ENCODE measurements at regions of chr2 and their contacts with region 1.

Region 1: DNA sequence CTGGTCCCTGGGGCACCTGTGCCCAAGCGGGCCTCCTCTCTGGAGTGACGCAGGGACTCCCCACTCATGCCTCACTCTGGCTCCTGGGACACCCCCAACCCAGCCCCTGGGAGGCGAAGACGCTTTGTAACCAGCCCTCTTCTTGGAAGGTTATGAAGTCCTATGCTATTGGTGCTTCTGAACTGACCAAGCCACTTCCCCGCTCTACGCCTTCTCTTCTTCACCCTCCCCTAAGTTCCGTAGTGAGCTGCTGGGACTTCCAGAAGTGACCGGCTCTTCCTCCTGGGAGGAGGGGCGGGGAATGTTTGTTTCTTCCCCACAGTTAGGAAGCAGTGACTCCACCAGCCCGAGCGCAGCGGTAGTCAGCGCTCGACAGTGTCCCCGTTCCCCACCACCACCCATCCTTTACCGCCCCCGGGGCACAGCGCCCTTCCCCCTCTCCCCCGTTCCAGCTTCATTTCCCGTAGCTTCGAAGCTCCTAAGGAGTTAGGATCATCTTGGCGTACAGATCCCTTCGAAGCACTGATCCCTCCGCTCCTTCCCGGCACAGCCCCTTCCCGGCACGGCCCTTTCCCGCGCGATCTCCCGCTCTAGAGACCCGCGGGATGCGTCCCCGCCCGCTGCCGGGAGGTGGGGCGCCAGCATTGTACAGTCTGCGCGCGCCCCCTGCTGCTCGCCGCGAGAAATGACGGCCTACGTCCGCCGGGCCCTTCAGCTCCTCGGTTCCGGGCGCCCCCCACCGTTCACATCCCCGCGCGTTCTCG is 25.3 kb upstream of the NOTO start:
- DNase-seq: peak; percentile 77
- H3K4me3 Mint-ChIP-seq: peak overlapping the region; percentile 84
- H3K27ac Mint-ChIP-seq: peak overlapping the region; percentile 50
- H3K4me1 Mint-ChIP-seq: peaks cover 26% of the 10 kb centered on the region
- H3K27me3 Mint-ChIP-seq: peaks cover 50% of the 10 kb centered on the region

Region 2: DNA sequence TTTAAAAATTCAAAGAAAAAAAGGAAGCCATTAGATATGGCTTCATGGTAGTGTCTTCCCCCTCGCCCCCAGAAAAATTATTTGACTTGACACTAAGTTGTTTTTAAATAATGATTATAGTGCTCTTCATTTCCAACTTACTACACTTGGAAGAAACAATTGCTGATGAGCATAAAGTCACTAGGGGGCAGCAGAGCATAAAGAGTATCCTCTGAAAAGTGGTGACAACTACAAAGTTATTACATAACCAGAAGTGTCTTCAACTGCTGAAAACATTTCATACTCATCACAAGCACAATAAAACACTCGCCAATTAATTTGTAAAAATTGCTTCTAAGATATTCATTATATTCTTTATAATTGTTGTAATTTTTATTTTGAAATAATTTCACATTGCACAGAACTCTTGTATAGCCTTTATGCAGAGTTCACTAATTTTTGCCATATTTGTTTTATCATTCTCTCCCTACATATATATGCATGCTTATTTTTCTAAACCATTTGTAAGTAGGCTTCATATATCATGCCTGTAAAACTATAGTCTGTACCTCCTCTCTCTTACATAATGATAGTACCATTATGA is 406.1 kb before region 1 on chr2:
- intact Hi-C with region 1: loop called (anchors 5 kb)
- DNase-seq: peak; percentile 45
- H3K4me3 Mint-ChIP-seq: no peak overlapping the region
- H3K27ac Mint-ChIP-seq: no peak overlapping the region
- H3K4me1 Mint-ChIP-seq: no peaks in the 10 kb centered on the region
- H3K27me3 Mint-ChIP-seq: no peaks in the 10 kb centered on the region

Region 3: DNA sequence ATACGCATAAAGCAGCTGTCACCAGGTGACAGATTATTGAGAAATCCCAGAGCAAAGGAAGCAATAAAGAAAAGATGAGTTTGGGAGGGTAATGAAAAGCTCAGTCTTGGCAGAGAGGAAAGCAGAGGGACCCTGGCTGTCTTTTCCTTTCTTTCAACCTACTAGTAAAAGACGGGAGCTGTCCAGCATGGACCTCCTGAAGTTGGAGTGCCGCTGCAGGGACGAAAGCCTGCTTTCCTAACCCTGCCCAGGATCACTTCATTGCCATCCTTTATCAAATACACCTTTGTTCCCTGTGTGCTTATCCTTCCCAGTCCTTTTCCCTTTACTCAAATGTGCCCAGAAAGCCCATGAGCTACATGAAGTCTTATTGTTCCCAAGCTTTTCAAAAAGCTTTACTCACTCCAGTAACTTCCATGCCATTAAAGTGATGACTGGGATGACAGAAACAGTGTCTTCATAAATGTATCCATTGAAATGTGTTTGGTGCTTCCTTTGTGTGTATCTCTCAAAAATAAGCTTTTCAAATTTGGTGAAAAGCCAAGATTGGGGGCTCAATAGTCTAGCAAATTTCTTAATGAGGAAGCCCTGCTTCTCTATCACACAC is 293.6 kb before region 1 on chr2:
- intact Hi-C with region 1: no loop called
- DNase-seq: no peak
- H3K4me3 Mint-ChIP-seq: no peak overlapping the region
- H3K27ac Mint-ChIP-seq: no peak overlapping the region
- H3K4me1 Mint-ChIP-seq: no peaks in the 10 kb centered on the region
- H3K27me3 Mint-ChIP-seq: peaks cover 42% of the 10 kb centered on the region

Region 4: DNA sequence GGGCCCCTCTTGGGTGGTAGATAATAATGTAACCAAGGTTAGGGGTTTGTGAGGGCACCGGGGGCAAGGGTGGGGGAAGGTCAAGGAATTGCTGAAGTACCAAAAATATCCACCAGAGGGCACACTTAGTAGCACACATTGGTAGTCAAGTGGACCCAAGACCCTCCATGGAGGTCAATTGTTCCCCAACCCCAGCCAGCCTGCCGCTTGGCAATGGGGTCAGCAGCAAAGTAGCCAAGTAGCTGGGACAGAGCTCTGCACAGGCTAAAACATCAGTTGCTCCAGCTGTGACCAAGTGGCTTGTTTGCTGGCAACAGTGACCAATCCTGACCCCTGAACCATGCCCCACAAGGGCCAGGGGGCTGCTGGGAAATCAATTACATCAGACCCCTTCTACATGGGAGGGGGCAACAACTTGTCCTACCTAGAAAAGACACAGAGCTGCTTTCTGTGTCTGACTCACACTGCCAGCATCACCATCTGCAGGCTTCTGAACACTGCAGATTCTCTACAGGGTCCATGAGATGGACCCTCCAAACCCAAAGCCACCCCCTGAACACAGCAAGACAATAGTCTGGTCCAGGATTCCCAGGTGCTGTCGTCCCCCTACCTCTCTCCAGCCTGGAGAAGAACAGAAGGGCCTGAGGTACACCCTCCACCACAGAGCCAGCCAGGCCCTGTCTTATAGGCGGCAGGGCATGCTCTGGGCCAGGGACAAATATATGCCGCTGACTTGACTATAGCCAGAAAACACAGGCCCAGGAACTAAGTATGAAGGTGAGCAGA is 183.7 kb before region 1 on chr2:
- intact Hi-C with region 1: loop called (anchors 1 kb)
- DNase-seq: peak; percentile 19
- H3K4me3 Mint-ChIP-seq: no peak overlapping the region
- H3K27ac Mint-ChIP-seq: no peak overlapping the region
- H3K4me1 Mint-ChIP-seq: no peaks in the 10 kb centered on the region
- H3K27me3 Mint-ChIP-seq: no peaks in the 10 kb centered on the region

Region 5: DNA sequence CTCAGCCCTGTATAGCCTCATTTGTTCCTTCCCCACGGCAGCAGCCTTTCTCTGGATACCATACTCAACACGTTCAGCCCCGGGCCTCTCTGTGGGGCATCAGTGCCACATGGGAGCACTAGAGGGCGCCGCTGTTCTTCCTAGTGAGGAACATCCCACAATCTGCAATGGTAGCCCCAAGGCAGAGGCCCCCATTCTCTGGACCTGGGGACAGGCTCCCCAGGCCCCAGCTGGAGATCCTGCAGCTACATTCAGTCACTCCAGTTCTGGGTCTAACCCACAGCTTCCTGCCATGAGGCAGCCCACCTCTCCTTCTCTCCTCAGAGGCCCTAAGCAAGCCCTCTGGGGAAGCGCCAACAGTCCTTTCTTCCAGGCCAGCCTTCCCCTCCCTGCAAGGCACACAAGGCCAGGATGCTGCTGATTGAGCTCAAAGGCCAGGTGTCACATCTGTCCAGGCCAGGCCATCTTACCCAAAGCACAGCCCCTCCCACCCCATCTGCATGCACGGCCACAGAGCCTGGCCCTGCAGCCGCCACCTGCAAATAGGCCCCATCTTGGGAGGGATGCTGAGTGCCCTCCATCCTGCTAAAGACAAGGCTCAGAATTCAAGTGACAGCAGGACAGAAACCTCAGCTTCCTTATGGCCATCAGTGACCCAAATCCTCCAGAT is 91.2 kb before region 1 on chr2:
- intact Hi-C with region 1: loop called (anchors 1 kb)
- DNase-seq: peak; percentile 69
- H3K4me3 Mint-ChIP-seq: no peak overlapping the region
- H3K27ac Mint-ChIP-seq: no peak overlapping the region
- H3K4me1 Mint-ChIP-seq: no peaks in the 10 kb centered on the region
- H3K27me3 Mint-ChIP-seq: no peaks in the 10 kb centered on the region

Region 6: DNA sequence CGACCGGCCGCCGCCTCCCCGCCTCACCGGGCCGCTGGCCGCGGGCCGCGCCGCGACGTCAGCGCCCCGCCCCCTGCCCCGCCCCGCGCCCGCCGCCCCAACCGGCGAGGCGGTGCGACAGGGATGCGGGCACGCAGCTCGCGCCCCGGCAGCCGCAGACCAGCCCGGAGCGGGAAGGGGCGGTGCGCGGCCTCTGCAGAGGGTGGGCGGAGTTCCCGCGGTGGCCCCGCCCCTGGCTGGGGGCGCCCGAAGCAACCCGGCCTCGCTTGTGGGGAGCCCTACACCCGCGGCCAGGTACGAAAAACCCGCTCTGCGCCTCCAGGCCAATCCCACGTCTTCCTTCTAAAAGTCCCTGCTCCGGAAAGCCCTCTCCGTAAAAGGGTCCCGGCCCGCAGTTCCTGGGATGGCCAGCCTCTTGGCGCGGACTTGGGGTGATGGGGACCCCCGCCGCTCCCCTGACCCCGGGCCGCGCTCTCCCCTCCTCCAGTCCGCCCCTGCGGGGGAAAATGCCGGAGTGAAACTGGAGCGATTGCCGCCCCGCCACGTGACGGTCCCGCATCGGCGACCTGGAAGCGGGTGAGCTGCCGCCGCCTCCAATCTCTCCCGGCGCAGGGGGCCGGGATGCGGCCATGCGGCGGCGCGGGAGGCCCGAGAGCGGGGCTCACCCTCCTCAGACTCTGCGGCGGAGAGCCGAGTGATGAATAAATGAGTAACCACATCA is 64.0 kb before region 1 on chr2 and contains the start of gene RAB11FIP5:
- intact Hi-C with region 1: loop called (anchors 2 kb)
- DNase-seq: peak; percentile 81
- H3K4me3 Mint-ChIP-seq: peak within 1 kb of the TSS; percentile 84
- H3K27ac Mint-ChIP-seq: peak within 1 kb of the TSS; percentile 46
- H3K4me1 Mint-ChIP-seq: peaks cover 25% of the 10 kb centered on the region
- H3K27me3 Mint-ChIP-seq: peaks cover 14% of the 10 kb centered on the region
- total RNA-seq, gene RAB11FIP5: 12.1 and 12.9 TPM in 2 replicates

Region 7: GRCh38 chr2:73163483-73164367 is 13.3 kb before region 1 on chr2:
- intact Hi-C with region 1: loop called (anchors 2 kb)
- DNase-seq: peak; percentile 37
- H3K4me3 Mint-ChIP-seq: no peak overlapping the region
- H3K27ac Mint-ChIP-seq: no peak overlapping the region
- H3K4me1 Mint-ChIP-seq: no peaks in the 10 kb centered on the region
- H3K27me3 Mint-ChIP-seq: peaks cover 9% of the 10 kb centered on the region

Measured in activated T-helper 1 cell treated with anti-CD3 and anti-CD28 coated beads, Interleukin-12 subunit alpha, Interleukin-12 subunit beta, Interleukin-2, Interleukin-4 antibody, amounts not matched to agents 30 ng/mL and 10 ng/mL and 1 ng/mL, durations not matched to agents 14 hours and 24 hours and 36 hours (primary cell).